ENCODE measurements at regions of chr6 and their contacts with region 1.

Region 1: DNA sequence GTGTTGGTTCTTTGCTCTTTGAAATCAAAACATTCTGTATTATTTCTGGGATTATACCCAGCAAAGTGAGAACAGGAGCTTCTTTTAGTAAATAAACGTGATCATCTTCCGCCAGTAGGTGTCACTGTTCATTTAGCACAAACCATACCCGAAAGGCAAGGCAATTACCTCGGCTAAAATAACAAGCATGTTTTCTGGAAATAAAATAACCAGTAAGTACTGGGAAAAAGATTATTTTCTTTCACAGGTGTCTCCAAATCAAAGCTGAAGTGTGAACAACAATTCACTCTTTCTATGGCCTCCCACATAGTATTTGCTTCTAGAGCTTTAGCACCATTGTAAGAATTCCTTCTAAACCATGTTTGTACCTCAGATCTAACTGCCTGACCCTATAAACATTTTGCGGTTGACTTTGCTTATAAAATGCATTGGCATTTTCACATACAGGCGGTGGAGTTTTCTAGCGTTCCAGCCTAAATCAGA is 144.6 kb upstream of the AGPAT4 start:
- DNase-seq: no peak
- ATAC-seq: peak; percentile 33; the same call in 1 of the 2 replicates
- H3K4me3 Mint-ChIP-seq: no peak overlapping the region
- H3K27ac Mint-ChIP-seq: no peak overlapping the region
- H3K4me1 Mint-ChIP-seq: peaks cover 27% of the 10 kb centered on the region
- H3K27me3 Mint-ChIP-seq: 0 out of 2 replicates have a peak, but pooled peaks cover 3% of the 10 kb centered on the region
- CTCF ChIP-seq: peak; percentile 73

Region 2: GRCh38 chr6:160871320-160871719 is 547.2 kb before region 1 on chr6:
- CTCF ChIA-PET with region 1: no interaction called
- POLR2A ChIA-PET with region 1: no interaction called
- DNase-seq: no peak
- ATAC-seq: no peak
- H3K4me3 Mint-ChIP-seq: no peak overlapping the region
- H3K27ac Mint-ChIP-seq: no peak overlapping the region
- H3K4me1 Mint-ChIP-seq: peaks cover 12% of the 10 kb centered on the region
- H3K27me3 Mint-ChIP-seq: no peaks in the 10 kb centered on the region
- CTCF ChIP-seq: no peak

Region 3: GRCh38 chr6:161200610-161201370 is 217.7 kb before region 1 on chr6:
- CTCF ChIA-PET with region 1: no interaction called
- POLR2A ChIA-PET with region 1: no interaction called
- DNase-seq: no peak
- ATAC-seq: peak; percentile 73
- H3K4me3 Mint-ChIP-seq: no peak overlapping the region
- H3K27ac Mint-ChIP-seq: peak overlapping the region; percentile 35; the same call in 1 of the 2 replicates
- H3K4me1 Mint-ChIP-seq: peaks cover 40% of the 10 kb centered on the region
- H3K27me3 Mint-ChIP-seq: no peaks in the 10 kb centered on the region
- CTCF ChIP-seq: no peak

Region 4: DNA sequence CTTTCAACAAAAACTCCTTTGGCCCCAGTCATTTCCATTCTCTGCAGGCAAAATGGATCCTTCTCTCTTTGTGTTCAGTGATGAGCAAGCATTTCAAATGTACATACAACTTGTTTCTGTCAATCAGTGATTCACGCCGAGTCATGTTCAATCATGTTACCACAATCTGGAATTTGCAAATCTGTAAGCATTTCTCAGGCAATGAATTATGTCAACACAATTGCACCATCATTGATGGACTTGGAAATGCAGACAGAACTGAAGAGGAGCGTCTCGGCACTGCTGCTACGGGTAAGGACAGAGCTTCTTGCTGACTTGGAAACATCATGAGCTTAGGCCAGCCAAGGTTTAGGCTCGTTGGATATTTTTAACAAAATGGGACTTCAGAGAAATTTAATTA is 11.9 kb before region 1 on chr6:
- CTCF ChIA-PET with region 1: interaction called, 16 read pairs
- POLR2A ChIA-PET with region 1: no interaction called
- DNase-seq: no peak
- ATAC-seq: no peak
- H3K4me3 Mint-ChIP-seq: no peak overlapping the region
- H3K27ac Mint-ChIP-seq: no peak overlapping the region
- H3K4me1 Mint-ChIP-seq: peaks cover 8% of the 10 kb centered on the region
- H3K27me3 Mint-ChIP-seq: no peaks in the 10 kb centered on the region; the same call in 1 of the 2 replicates
- CTCF ChIP-seq: no peak

Region 5: DNA sequence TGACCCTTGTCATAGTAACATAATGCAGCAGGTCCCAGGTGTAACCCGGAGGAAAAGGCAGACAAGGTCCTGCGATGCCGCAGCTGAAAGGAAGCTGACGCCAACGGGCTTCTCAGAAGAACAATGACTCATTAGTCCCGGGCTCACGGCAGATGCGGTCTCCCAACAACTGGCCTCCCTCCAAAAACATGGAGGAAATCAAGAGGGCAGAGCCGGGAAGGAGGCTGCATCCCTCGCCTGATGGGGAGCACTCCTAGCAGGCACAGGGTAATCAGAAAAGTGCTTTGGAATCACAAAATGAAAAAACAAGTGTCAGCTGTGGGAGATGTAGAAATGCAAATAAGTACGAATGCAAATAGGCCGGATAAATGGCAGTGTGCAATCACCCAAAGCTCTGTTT is 20.6 kb after region 1 on chr6:
- CTCF ChIA-PET with region 1: interaction called, 32 read pairs
- POLR2A ChIA-PET with region 1: no interaction called
- DNase-seq: no peak
- ATAC-seq: no peak
- H3K4me3 Mint-ChIP-seq: no peak overlapping the region
- H3K27ac Mint-ChIP-seq: no peak overlapping the region
- H3K4me1 Mint-ChIP-seq: peaks cover 28% of the 10 kb centered on the region
- H3K27me3 Mint-ChIP-seq: peaks cover 32% of the 10 kb centered on the region
- CTCF ChIP-seq: no peak

Region 6: DNA sequence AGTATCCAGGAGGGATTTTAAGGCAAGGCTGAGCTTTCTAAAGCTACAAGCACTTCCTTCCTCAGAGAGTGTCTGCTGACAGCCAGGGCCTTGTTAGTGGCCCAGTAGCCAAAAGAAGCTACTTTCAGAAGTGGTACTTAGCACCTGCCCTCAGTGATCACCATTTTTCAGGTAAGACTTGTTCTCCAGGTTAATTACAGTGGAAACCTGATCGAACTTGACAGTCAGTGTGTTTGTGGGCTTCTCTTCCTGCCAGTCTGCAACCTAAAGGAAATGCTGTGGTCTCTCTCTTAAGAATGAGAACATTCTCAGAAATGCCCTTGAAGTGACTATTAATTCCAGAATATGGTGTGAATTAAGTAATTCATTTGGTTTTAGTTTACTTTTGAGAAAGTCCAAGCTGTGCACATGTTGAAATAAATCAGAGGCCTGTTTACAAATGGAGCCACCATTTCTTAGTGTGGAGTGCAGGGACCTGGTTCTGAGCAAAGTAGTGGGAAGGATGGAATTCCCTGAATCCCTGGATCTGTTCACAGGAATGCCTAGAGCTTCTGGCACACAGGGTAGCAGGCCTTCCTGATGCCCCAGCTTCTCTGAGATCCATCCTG is 40.6 kb after region 1 on chr6:
- CTCF ChIA-PET with region 1: interaction called, 21 read pairs
- POLR2A ChIA-PET with region 1: no interaction called
- DNase-seq: no peak
- ATAC-seq: no peak
- H3K4me3 Mint-ChIP-seq: no peak overlapping the region
- H3K27ac Mint-ChIP-seq: no peak overlapping the region
- H3K4me1 Mint-ChIP-seq: no peaks in the 10 kb centered on the region
- H3K27me3 Mint-ChIP-seq: no peaks in the 10 kb centered on the region
- CTCF ChIP-seq: no peak

Region 7: GRCh38 chr6:161498359-161498758 is 79.9 kb after region 1 on chr6:
- CTCF ChIA-PET with region 1: interaction called, 47 read pairs
- POLR2A ChIA-PET with region 1: no interaction called
- DNase-seq: peak; percentile 66
- ATAC-seq: peak; percentile 98
- H3K4me3 Mint-ChIP-seq: no peak overlapping the region
- H3K27ac Mint-ChIP-seq: no peak overlapping the region
- H3K4me1 Mint-ChIP-seq: peaks cover 3% of the 10 kb centered on the region
- H3K27me3 Mint-ChIP-seq: peaks cover 33% of the 10 kb centered on the region
- CTCF ChIP-seq: no peak

Region 8: GRCh38 chr6:161694995-161695394 is 276.5 kb after region 1 on chr6:
- CTCF ChIA-PET with region 1: interaction called, 19 read pairs
- POLR2A ChIA-PET with region 1: no interaction called
- DNase-seq: no peak
- ATAC-seq: peak; percentile 95
- H3K4me3 Mint-ChIP-seq: no peak overlapping the region
- H3K27ac Mint-ChIP-seq: no peak overlapping the region
- H3K4me1 Mint-ChIP-seq: no peaks in the 10 kb centered on the region
- H3K27me3 Mint-ChIP-seq: no peaks in the 10 kb centered on the region
- CTCF ChIP-seq: peak; percentile 38

Measured in WTC11 (cell line).